ENCODE measurements at regions of chr3 and their contacts with region 1.

Region 1: DNA sequence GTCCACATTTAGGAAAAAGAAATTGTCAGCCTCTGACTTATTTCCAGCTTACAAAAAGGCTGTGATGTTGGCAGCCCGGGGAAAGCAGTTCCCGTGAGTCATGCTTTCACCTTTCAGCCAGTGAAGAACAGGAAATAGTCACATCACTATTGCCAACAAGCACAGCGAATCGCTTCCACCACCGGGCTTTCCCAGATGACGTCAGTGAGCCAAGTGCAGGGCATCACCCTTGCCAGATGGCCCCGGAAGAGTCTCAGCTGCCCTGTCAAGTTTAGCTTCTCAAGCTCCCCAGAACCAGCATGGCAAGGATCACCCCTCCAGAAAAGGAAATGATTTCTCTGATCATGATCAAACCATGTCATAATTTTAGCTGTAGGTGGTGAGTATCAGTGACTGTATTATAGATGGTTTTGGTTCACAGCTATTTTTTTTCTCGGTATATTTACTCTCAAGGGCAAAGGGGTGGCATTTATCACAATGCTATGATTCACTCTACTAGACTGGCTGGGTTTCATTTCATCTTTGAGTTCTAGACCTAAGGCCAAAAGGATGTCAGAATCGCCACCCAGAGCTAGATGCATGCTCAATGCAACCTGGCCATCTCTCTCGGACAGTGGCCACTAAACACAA is 32.9 kb downstream of the B3GNT5 start:
- DNase-seq: peak; percentile 97
- ATAC-seq: peak; percentile 93
- H3K4me3 Mint-ChIP-seq: peak overlapping the region; percentile 56
- H3K27ac Mint-ChIP-seq: peak overlapping the region; percentile 98
- H3K4me1 Mint-ChIP-seq: peaks cover 43% of the 10 kb centered on the region
- H3K27me3 Mint-ChIP-seq: no peaks in the 10 kb centered on the region

Region 2: GRCh38 chr3:182792901-182793662 is 492.9 kb before region 1 on chr3 and contains the start of gene ATP11B:
- CTCF ChIA-PET with region 1: no interaction called
- POLR2A ChIA-PET with region 1: no interaction called
- intact Hi-C with region 1: loop called in 1 of 2 experiments (anchors 10 kb)
- DNase-seq: peak; percentile 85
- ATAC-seq: peak; percentile 43
- H3K4me3 Mint-ChIP-seq: peak within 1 kb of the TSS; percentile 96
- H3K27ac Mint-ChIP-seq: peak within 1 kb of the TSS; percentile 99
- H3K4me1 Mint-ChIP-seq: peaks cover 27% of the 10 kb centered on the region
- H3K27me3 Mint-ChIP-seq: no peaks in the 10 kb centered on the region
- total RNA-seq, gene ATP11B: 64.6 to 86.7 TPM

Region 3: DNA sequence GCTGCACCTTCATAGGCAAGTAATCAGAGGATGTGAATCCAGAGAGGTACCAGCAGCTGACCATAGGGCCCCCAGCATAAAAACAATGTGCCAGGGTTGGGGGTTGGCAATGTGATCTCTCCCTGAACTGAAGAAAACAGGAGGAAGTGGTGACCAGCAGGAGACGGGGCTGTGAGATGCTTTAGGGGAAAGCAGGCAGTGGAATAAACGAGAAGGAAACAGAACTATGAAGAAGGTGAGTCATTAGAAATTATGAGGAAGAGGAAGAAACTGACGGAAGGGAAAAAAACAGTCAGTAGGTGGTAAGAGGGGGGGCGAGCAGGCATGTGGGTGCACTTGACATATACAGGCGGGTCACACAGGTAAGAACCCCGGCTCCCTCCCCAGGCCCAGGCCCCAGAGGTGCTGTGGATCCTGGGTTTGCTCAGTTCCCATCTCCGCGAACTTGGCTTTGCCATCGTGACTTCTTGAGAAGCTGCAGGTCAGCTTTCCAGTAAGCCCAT is 75.1 kb before region 1 on chr3:
- CTCF ChIA-PET with region 1: interaction called, 4 read pairs
- POLR2A ChIA-PET with region 1: no interaction called
- intact Hi-C with region 1: loop called (anchors 1 to 2 kb)
- DNase-seq: peak; percentile 68
- ATAC-seq: peak; percentile 66
- H3K4me3 Mint-ChIP-seq: no peak overlapping the region
- H3K27ac Mint-ChIP-seq: peak overlapping the region; percentile 72
- H3K4me1 Mint-ChIP-seq: peaks cover 63% of the 10 kb centered on the region
- H3K27me3 Mint-ChIP-seq: no peaks in the 10 kb centered on the region

Region 4: GRCh38 chr3:183265834-183266417 is 20.0 kb before region 1 on chr3:
- CTCF ChIA-PET with region 1: interaction called, 10 read pairs
- POLR2A ChIA-PET with region 1: interaction called, 39 read pairs
- intact Hi-C with region 1: loop called (anchors 1 kb)
- DNase-seq: peak; percentile 75
- ATAC-seq: peak; percentile 98
- H3K4me3 Mint-ChIP-seq: no peak overlapping the region
- H3K27ac Mint-ChIP-seq: no peak overlapping the region
- H3K4me1 Mint-ChIP-seq: peaks cover 2% of the 10 kb centered on the region
- H3K27me3 Mint-ChIP-seq: no peaks in the 10 kb centered on the region

Region 5: GRCh38 chr3:183330881-183331280 is 44.9 kb after region 1 on chr3:
- CTCF ChIA-PET with region 1: no interaction called
- POLR2A ChIA-PET with region 1: no interaction called
- intact Hi-C with region 1: loop called in 1 of 2 experiments (anchors 5 kb)
- DNase-seq: no peak
- ATAC-seq: no peak
- H3K4me3 Mint-ChIP-seq: no peak overlapping the region
- H3K27ac Mint-ChIP-seq: no peak overlapping the region
- H3K4me1 Mint-ChIP-seq: peaks cover 27% of the 10 kb centered on the region
- H3K27me3 Mint-ChIP-seq: no peaks in the 10 kb centered on the region

Region 6: DNA sequence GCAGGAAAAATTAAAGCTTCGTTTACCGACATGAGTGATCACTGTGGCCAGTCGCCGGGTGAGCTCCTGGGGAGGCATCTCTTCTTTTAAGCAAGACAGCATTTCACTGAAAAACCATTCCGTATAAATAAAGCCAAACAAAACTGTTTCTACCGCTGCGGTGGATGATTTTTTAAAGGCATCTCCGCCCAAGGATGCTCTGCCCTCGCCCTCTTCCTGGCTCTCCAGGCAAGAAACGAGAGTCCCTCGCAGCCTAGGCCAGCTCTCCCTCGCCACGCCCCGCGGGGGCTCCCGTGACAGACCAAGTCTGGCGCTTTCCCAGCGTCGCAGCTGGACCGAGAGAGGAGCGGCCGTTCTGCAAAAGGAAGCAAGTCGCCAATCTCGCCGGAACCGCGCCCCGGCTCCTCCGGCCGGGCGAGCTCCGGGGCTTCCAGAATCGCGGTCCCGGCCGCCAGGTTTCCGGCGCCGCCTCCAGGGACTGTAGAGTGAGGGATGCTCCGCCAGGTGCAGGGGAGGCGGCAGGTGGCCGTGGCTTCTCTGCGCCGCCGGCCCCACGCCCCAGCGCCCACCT is 142.0 kb after region 1 on chr3:
- CTCF ChIA-PET with region 1: no interaction called
- POLR2A ChIA-PET with region 1: no interaction called
- intact Hi-C with region 1: loop called (anchors 1 kb)
- DNase-seq: peak; percentile 57
- ATAC-seq: peak; percentile 21
- H3K4me3 Mint-ChIP-seq: peak overlapping the region; percentile 79
- H3K27ac Mint-ChIP-seq: no peak overlapping the region
- H3K4me1 Mint-ChIP-seq: peaks cover 43% of the 10 kb centered on the region
- H3K27me3 Mint-ChIP-seq: peaks cover 11% of the 10 kb centered on the region

Region 7: DNA sequence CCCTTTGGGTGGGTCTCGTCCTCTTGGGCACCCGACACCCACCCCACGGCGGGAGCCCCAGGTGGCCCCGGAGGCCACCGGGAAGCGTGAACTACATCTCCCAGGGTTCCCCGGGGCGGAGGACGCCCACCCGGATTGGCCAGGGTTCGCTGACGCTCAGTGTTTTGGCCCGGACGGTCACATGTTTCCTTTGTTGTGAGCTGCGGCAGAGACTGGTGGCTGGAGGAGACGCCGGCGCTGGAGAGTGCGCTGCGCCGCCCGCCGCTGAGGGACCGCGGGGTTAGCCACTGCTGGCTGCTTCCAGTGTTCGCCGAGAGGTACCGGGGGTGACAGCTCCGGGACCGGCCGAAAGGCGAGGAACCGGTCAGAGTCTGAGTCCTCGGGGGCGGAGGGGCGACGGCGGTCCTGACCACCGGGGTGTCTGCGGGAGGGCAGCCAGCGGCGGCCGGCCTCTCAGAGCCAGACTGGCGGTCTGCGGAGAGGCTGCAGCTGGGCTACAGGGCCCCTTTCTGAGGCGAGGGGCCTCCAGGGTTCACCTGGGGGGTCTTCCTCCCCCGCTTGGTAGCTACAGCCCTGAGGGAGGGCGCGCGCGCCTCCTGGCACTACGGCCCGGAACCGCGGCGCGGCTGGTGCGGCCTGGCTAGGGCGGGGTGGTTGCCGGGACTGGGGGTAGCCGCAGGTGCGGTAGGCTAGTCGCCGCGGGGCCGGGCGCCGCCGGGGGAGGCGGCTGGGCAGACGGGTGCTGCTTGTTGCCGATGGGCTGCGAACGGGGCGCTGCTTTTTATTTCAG is 349.7 kb after region 1 on chr3 and contains the start of gene KLHL24:
- CTCF ChIA-PET with region 1: no interaction called
- POLR2A ChIA-PET with region 1: no interaction called
- intact Hi-C with region 1: loop called in 1 of 2 experiments (anchors 5 kb)
- DNase-seq: peak; percentile 95
- ATAC-seq: peak; percentile 85
- H3K4me3 Mint-ChIP-seq: peak within 1 kb of the TSS; percentile 87
- H3K27ac Mint-ChIP-seq: peak within 1 kb of the TSS; percentile 92
- H3K4me1 Mint-ChIP-seq: peaks cover 36% of the 10 kb centered on the region
- H3K27me3 Mint-ChIP-seq: no peaks in the 10 kb centered on the region
- total RNA-seq, gene KLHL24: 9.6 to 15.8 TPM